ENCODE measurements at regions of chr15 and their contacts with region 1.

Region 1: DNA sequence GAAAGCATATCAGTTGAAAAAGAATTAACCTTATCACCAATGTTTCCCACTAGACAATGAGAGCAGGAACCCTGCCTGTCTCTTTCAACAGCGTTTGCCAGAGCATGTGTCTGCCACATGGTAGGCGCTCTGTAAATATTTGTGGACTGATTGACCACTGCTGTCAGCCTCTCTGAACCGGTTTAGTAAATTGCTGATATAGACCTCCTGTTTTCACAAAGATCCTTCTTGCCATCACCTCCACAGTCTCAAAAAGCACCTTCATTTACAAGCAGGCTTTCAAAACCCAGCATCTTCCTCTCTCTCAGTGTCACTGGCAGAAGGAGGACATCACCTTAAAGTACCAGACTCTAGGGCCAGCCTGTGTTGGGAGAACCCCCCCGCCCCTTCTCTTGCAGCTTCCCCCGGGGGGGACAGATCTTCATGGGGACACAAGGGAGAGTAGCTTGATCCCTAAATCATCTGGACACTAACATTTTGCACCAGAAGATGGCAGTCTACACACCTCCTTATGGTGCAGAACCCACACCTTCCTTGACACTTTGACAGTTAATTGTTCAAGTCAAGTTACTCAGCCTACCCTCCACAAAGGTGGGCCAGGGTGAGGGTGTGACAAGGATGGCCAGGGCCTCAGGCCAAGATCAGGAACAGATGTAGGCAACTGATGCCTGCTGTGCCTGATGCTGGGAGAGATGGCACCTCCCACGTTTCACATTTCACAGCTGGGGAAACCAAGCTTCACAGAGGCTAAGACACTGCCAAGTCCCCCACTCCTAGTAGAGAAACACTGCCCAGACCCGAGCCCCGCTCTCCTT is 37.8 kb upstream of the USP3 start:
- DNase-seq: peak; percentile 53 to 68
- H3K4me3 ChIP-seq: no peak overlapping the region
- H3K4me3 Mint-ChIP-seq: peak overlapping the region; percentile 51
- H3K27ac Mint-ChIP-seq: peak overlapping the region; percentile 35
- H3K4me1 ChIP-seq: peaks cover 31% of the 10 kb centered on the region
- H3K4me1 Mint-ChIP-seq: peaks cover 27% of the 10 kb centered on the region
- H3K27me3 ChIP-seq: no peaks in the 10 kb centered on the region
- H3K27me3 Mint-ChIP-seq: no peaks in the 10 kb centered on the region
- CTCF ChIP-seq: peak; percentile 55 to 60

Region 2: GRCh38 chr15:63296195-63296594 is 170.4 kb before region 1 on chr15:
- CTCF ChIA-PET with region 1: no interaction called
- POLR2A ChIA-PET with region 1: no interaction called
- intact Hi-C with region 1: no loop called
- DNase-seq: no peak
- H3K4me3 ChIP-seq: no peak overlapping the region
- H3K4me3 Mint-ChIP-seq: no peak overlapping the region
- H3K27ac Mint-ChIP-seq: no peak overlapping the region
- H3K4me1 ChIP-seq: no peaks in the 10 kb centered on the region
- H3K4me1 Mint-ChIP-seq: no peaks in the 10 kb centered on the region
- H3K27me3 ChIP-seq: no peaks in the 10 kb centered on the region
- H3K27me3 Mint-ChIP-seq: no peaks in the 10 kb centered on the region
- CTCF ChIP-seq: no peak

Region 3: GRCh38 chr15:63434576-63435186 is 31.9 kb before region 1 on chr15:
- CTCF ChIA-PET with region 1: interaction called, 7 read pairs
- POLR2A ChIA-PET with region 1: interaction called, 10 read pairs
- intact Hi-C with region 1: no loop called
- DNase-seq: no peak
- H3K4me3 ChIP-seq: no peak overlapping the region
- H3K4me3 Mint-ChIP-seq: no peak overlapping the region
- H3K27ac Mint-ChIP-seq: no peak overlapping the region
- H3K4me1 ChIP-seq: no peaks in the 10 kb centered on the region
- H3K4me1 Mint-ChIP-seq: no peaks in the 10 kb centered on the region
- H3K27me3 ChIP-seq: no peaks in the 10 kb centered on the region
- H3K27me3 Mint-ChIP-seq: no peaks in the 10 kb centered on the region
- CTCF ChIP-seq: no peak

Region 4: GRCh38 chr15:64180235-64180837 is 713.8 kb after region 1 on chr15:
- CTCF ChIA-PET with region 1: no interaction called
- POLR2A ChIA-PET with region 1: no interaction called
- intact Hi-C with region 1: no loop called
- DNase-seq: no peak
- H3K4me3 ChIP-seq: no peak overlapping the region
- H3K4me3 Mint-ChIP-seq: no peak overlapping the region
- H3K27ac Mint-ChIP-seq: no peak overlapping the region
- H3K4me1 ChIP-seq: no peaks in the 10 kb centered on the region
- H3K4me1 Mint-ChIP-seq: no peaks in the 10 kb centered on the region
- H3K27me3 ChIP-seq: no peaks in the 10 kb centered on the region
- H3K27me3 Mint-ChIP-seq: no peaks in the 10 kb centered on the region
- CTCF ChIP-seq: no peak